ENCODE measurements at regions of chr22 and their contacts with region 1.

Region 1: GRCh38 chr22:32411829-32412592 is at the start of gene RTCB:
- DNase-seq: peak; percentile 81 to 94 (median 89)
- ATAC-seq: peak; percentile 87 to 93 (median 92)
- H3K4me3 ChIP-seq: peak within 1 kb of the TSS; percentile 93 to 98
- H3K4me3 Mint-ChIP-seq: peak within 1 kb of the TSS; percentile 96 to 99 (median 98)
- H3K27ac ChIP-seq: peak within 1 kb of the TSS; percentile 68
- H3K27ac Mint-ChIP-seq: peak within 1 kb of the TSS; percentile 93 to 95
- H3K4me1 ChIP-seq: peaks cover 11 to 23% of the 10 kb centered on the region in 2 experiments
- H3K4me1 Mint-ChIP-seq: peaks cover 52 to 57% (median 55%) of the 10 kb centered on the region in 3 donors
- H3K27me3 ChIP-seq: peaks cover 0 to under 1% of the 10 kb centered on the region in 2 experiments
- H3K27me3 Mint-ChIP-seq: peaks cover 5 to 7% of the 10 kb centered on the region in 2 donors
- total RNA-seq, gene RTCB: 35.8 to 49.4 (median 45.2) TPM

Region 2: DNA sequence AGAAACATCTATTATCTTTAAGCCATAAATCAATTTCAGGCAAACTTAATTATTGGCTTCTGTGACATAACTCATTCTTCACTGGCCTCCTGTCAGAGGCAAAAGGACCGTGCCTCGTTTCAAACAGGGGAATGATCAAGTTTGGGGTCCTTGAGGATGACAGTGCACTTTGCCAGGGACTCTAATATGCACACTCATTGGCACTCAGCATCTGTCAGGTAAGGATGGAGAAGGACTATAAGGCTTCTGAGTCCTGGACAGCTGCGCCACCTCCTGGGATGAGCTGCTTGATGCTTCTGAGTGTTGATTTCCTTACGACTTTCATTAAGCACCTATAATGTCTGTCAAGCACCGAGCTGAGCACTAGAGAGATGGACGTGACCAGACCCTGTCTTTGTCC is 32.1 kb after region 1 on chr22:
- CTCF ChIA-PET with region 1: no interaction called
- POLR2A ChIA-PET with region 1: no interaction called
- DNase-seq: peak in 4 of 35 experiments; percentile 1 to 16 (median 2)
- ATAC-seq: no peak
- H3K4me3 ChIP-seq: no peak overlapping the region
- H3K4me3 Mint-ChIP-seq: no peak overlapping the region
- H3K27ac ChIP-seq: no peak overlapping the region
- H3K27ac Mint-ChIP-seq: no peak overlapping the region
- H3K4me1 ChIP-seq: no peaks in the 10 kb centered on the region
- H3K4me1 Mint-ChIP-seq: no peaks in the 10 kb centered on the region
- H3K27me3 ChIP-seq: peaks cover 6 to 11% of the 10 kb centered on the region in 2 experiments
- H3K27me3 Mint-ChIP-seq: peaks cover 2 to 3% of the 10 kb centered on the region in 2 donors

Region 3: DNA sequence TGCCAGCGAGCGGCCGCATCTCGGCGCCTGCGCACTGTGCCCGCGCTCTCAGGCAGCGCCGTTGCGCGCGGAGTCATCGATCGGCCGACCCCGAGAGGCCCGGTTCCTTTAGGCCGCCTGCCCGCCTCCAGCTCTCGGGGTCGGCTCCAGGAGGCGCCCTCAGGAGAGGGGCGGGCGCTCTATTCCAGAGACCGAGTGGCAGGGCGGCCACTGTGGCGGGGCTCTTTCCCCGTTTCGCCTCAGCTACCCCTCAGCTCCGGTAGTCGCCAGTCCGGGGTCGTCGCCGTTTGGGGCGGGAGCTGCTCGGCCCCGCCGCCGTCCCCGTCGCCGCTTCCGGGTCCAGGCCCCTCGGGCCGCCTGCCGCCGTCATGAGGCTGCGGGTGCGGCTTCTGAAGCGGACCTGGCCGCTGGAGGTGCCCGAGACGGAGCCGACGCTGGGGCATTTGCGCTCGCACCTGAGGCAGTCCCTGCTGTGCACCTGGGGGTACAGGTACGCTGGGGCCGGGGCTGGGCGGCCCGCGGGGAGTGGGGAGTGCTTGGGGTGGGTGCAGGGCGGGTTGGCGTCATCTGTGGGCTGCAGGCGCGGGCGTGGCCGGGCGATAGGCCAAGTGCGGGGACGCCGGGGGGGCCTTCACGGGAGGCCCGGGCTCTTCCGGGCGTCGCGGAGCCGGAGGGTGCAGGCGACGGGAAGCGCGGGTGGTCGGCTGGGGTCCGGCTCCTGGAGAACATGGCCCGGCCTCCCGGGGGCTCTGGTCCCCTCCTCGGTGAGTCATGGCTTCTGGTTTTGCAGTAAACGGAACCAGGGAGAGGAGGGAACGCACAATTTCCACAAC is 62.8 kb after region 1 on chr22 and contains the start of gene FBXO7:
- CTCF ChIA-PET with region 1: interaction called in 1 of 2 experiments, 13 read pairs
- POLR2A ChIA-PET with region 1: interaction called in 1 of 2 experiments, 3 read pairs
- DNase-seq: peak; percentile 69 to 92 (median 82)
- ATAC-seq: peak; percentile 82 to 90 (median 86)
- H3K4me3 ChIP-seq: peak within 1 kb of the TSS; percentile 87 to 94
- H3K4me3 Mint-ChIP-seq: peak within 1 kb of the TSS; percentile 88 to 95 (median 95)
- H3K27ac ChIP-seq: peak within 1 kb of the TSS; percentile 86
- H3K27ac Mint-ChIP-seq: peak within 1 kb of the TSS; percentile 93 to 95
- H3K4me1 ChIP-seq: peaks cover 15 to 25% of the 10 kb centered on the region in 2 experiments
- H3K4me1 Mint-ChIP-seq: peaks cover 14 to 26% (median 25%) of the 10 kb centered on the region in 3 donors
- H3K27me3 ChIP-seq: no peaks in the 10 kb centered on the region
- H3K27me3 Mint-ChIP-seq: no peaks in the 10 kb centered on the region
- total RNA-seq, gene FBXO7: 77.8 to 127 (median 83.4) TPM